ENCODE measurements at regions of chr3 and their contacts with region 1.

Region 1: DNA sequence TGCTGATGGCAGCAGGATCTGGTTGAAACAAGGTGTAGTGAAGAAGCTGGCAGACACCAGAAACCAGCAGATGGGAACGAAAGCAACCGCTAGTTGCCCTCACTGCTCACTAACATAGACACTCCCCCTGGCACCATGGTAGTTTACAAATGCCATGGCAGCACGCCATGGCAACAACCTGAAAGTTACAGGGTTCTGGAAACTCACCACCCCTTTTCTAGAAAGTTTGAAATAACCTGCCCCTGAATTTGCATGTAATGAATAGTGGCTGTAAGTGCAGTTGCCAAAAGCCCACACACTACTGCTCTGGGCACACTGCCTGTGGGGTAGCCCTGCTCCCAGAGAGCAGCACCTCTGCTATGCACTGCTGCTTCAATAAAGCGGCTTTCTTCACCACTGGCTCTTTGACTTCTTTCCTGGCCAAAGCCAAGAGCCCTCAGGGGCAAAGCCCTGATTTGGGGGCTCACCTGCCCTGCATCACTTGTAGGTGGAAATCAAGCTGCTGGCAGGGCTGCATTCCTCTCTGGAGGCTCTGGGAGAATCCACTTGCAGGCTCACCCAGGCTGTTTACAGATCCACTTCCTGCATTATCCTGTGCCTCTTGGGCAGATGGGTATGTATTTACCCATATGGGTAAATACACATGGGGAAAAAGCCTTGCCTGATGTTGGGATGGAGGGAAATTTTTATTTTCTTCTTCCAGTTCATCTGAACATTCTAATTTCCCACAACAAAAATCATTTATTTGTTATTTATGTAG is 2.0 kb upstream of the GP9 start:
- DNase-seq: peak; percentile 17
- H3K4me3 Mint-ChIP-seq: no peak overlapping the region
- H3K27ac Mint-ChIP-seq: no peak overlapping the region
- H3K4me1 Mint-ChIP-seq: peaks cover 3% of the 10 kb centered on the region
- H3K27me3 Mint-ChIP-seq: peaks cover 20% of the 10 kb centered on the region
- CTCF ChIP-seq: no peak

Region 2: GRCh38 chr3:128942161-128942876 is 116.3 kb before region 1 on chr3:
- CTCF ChIA-PET with region 1: no interaction called
- POLR2A ChIA-PET with region 1: no interaction called
- intact Hi-C with region 1: no loop called
- DNase-seq: no peak
- H3K4me3 Mint-ChIP-seq: no peak overlapping the region
- H3K27ac Mint-ChIP-seq: no peak overlapping the region
- H3K4me1 Mint-ChIP-seq: no peaks in the 10 kb centered on the region
- H3K27me3 Mint-ChIP-seq: no peaks in the 10 kb centered on the region
- CTCF ChIP-seq: no peak

Region 3: GRCh38 chr3:129016356-129016719 is 42.3 kb before region 1 on chr3:
- CTCF ChIA-PET with region 1: interaction called, 13 read pairs
- POLR2A ChIA-PET with region 1: no interaction called
- intact Hi-C with region 1: no loop called
- DNase-seq: peak; percentile 25
- H3K4me3 Mint-ChIP-seq: no peak overlapping the region
- H3K27ac Mint-ChIP-seq: no peak overlapping the region
- H3K4me1 Mint-ChIP-seq: no peaks in the 10 kb centered on the region
- H3K27me3 Mint-ChIP-seq: no peaks in the 10 kb centered on the region
- CTCF ChIP-seq: no peak

Region 4: DNA sequence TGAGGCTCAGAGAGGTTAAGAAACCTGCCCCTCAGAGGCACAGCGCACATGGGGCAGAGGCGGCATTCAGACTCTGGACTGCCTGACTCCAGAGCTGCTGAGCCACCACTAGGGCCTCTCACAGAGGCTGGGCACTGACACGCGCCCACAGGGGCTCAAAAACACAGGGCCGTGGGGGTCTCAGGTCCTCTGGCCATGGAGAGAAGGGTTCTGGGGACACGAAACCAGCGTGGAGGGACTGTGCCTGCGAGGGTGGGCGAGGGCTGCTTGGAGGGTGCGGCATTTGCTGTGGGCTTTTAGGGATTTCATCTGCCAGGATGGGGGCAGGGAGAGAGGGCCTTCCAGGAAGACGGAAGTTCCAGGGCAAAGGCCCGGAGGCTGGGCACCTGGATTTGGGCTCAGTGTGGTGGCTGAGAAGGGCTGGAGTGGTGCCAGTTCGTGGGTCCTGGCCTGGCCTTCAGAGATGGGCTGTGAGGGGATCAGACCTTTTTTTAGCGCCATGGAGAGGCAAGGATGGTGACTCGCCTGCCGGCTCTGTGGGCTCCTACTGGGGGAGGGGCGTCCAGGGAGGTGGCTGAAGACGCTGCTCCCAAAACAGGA is 300.3 kb after region 1 on chr3:
- CTCF ChIA-PET with region 1: no interaction called
- POLR2A ChIA-PET with region 1: no interaction called
- intact Hi-C with region 1: no loop called
- DNase-seq: no peak
- H3K4me3 Mint-ChIP-seq: no peak overlapping the region
- H3K27ac Mint-ChIP-seq: no peak overlapping the region
- H3K4me1 Mint-ChIP-seq: no peaks in the 10 kb centered on the region
- H3K27me3 Mint-ChIP-seq: no peaks in the 10 kb centered on the region
- CTCF ChIP-seq: no peak

Measured in MCF 10A (cell line).